H1 (cell line): ENCODE measurements at regions of chr9 and their contacts with region 1.

Region 1: GRCh38 chr9:87834357-87834756 is 48.3 kb upstream of the SPATA31E1 start:
- DNase-seq: peak; percentile 49 to 86
- H3K4me3 ChIP-seq: no peak overlapping the region
- H3K27ac ChIP-seq: no peak overlapping the region
- H3K4me1 ChIP-seq: peaks cover 0 to 10% (median 2%) of the 10 kb centered on the region in 4 experiments; a peak in 3 of 7 replicates
- H3K27me3 ChIP-seq: peaks cover 0 to 3% (median 0%) of the 10 kb centered on the region in 4 experiments; a peak in 4 of 7 replicates
- CTCF ChIP-seq: peak; percentile 63 to 77 (median 75)
- EP300 ChIP-seq: no peak
- POLR2A ChIP-seq: no peak
- RAD21 ChIP-seq: peak; percentile 60 to 76

Region 2: GRCh38 chr9:87640385-87640795 is 194.0 kb before region 1 on chr9:
- CTCF ChIA-PET with region 1: no interaction called
- POLR2A ChIA-PET with region 1: no interaction called
- DNase-seq: no peak
- H3K4me3 ChIP-seq: no peak overlapping the region
- H3K27ac ChIP-seq: no peak overlapping the region
- H3K4me1 ChIP-seq: peaks cover 0 to 9% (median 3%) of the 10 kb centered on the region in 4 experiments; a peak in 4 of 7 replicates
- H3K27me3 ChIP-seq: no peaks in the 10 kb centered on the region
- CTCF ChIP-seq: no peak
- EP300 ChIP-seq: no peak
- POLR2A ChIP-seq: no peak
- RAD21 ChIP-seq: no peak

Region 3: DNA sequence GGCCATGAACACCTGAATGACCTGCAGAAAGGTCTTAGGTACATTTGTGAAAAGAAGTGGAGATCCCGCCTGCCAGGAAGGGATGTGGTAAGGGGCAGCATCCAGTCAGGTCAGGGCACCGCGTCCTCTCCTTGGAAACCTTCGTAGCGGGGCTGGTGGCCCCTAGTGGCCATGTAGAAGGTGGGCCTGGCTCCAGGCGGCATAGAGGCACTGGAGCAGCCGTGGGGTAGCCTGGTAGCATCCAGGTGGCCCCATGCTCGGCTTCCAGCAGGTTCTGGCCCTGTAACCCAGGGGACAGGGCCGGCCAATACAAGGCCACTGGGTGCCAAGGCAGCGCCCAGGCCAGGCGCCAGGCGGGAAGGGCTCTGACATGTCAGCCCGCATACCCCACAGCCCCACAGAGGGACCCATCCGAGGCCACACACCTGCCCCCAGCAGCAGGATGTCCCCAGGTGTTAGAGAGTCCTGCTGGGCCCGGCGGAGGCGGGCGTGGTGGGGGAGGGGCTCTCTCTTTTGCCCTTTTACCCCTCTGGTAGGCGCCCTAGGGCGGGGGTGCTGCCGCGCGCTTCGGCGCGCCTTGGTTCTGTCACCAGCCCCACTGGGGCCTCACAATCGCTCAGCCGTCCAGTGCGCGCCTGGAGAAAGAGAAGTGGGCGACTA is 10.0 kb before region 1 on chr9:
- CTCF ChIA-PET with region 1: interaction called, 16 read pairs
- POLR2A ChIA-PET with region 1: no interaction called
- DNase-seq: peak in 1 of 2 experiments; percentile 62
- H3K4me3 ChIP-seq: no peak overlapping the region
- H3K27ac ChIP-seq: no peak overlapping the region
- H3K4me1 ChIP-seq: no peaks in the 10 kb centered on the region
- H3K27me3 ChIP-seq: peaks cover 0 to 2% (median 0%) of the 10 kb centered on the region in 4 experiments; a peak in 1 of 7 replicates
- CTCF ChIP-seq: peak; percentile 63 to 76 (median 69)
- EP300 ChIP-seq: no peak
- POLR2A ChIP-seq: no peak
- RAD21 ChIP-seq: peak; percentile 56 to 72